H1 (cell line): ENCODE measurements at regions of chr6 and their contacts with region 1.

Region 1: DNA sequence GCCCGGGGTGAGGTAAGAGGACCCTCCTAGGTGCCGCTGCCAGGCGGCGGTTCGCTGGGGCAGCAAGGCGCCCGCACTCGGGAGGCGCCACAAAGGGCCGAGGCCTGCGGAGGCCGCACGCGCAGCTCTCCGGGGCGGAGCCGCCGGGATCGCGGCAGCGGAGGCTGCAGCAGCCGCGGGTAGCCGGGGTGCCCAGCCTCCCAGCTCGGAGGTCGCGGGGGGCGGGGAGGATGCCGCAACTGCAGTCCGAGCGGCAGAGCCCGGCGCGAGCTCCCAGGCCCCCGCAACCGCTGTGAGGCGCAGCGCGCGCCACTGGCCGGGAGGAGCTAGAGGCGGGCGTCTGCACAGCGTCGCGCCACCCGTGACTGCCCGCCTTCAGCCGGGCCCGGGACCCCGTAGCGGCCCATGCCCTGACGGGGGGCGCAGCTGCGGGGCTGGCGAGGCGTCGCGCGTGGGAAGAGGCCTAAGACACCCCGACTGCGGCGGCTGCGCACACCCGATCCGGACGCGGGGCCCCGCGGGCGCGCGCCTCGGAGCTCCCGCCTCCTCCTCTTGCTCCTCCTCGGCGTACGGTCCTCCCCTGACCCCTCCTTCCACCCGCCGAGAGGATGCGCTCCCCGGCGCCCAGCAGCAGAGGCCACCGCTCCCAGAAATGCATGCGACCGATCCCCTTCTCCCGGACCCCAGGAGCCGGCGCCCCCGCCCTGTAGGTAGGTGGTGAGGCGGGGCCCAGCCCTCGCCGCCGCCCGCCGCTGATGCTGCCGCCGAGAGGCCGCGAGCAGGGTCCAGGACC is at the start of gene NCOA7:
- DNase-seq: peak in 1 of 2 experiments; percentile 84
- H3K4me3 ChIP-seq: peak within 1 kb of the TSS; percentile 66 to 84 (median 74)
- H3K27ac ChIP-seq: peak within 1 kb of the TSS; percentile 49; the same call in 1 of the 2 replicates
- H3K4me1 ChIP-seq: peaks cover 2 to 10% (median 4%) of the 10 kb centered on the region in 4 experiments; a peak in 4 of 7 replicates
- H3K27me3 ChIP-seq: no peaks in the 10 kb centered on the region; a peak in 1 of 7 replicates
- CTCF ChIP-seq: no peak
- EP300 ChIP-seq: 0 out of 3 replicates have a peak, but pooled peaks of 1 of the 2 experiments have one; percentile 11
- POLR2A ChIP-seq: peak; percentile 53 to 77
- RAD21 ChIP-seq: no peak
- total RNA-seq, gene NCOA7: 10.3 and 10.7 TPM in 2 replicates

Region 2: GRCh38 chr6:125759184-125759902 is 31.2 kb before region 1 on chr6:
- CTCF ChIA-PET with region 1: interaction called, 15 read pairs
- POLR2A ChIA-PET with region 1: no interaction called
- DNase-seq: peak in 1 of 2 experiments; percentile 94
- H3K4me3 ChIP-seq: no peak overlapping the region
- H3K27ac ChIP-seq: no peak overlapping the region
- H3K4me1 ChIP-seq: peaks cover 0 to 3% (median 0%) of the 10 kb centered on the region in 4 experiments; a peak in 1 of 7 replicates
- H3K27me3 ChIP-seq: no peaks in the 10 kb centered on the region
- CTCF ChIP-seq: peak; percentile 65 to 94 (median 83)
- EP300 ChIP-seq: no peak
- POLR2A ChIP-seq: no peak
- RAD21 ChIP-seq: peak; percentile 76 to 81

Region 3: DNA sequence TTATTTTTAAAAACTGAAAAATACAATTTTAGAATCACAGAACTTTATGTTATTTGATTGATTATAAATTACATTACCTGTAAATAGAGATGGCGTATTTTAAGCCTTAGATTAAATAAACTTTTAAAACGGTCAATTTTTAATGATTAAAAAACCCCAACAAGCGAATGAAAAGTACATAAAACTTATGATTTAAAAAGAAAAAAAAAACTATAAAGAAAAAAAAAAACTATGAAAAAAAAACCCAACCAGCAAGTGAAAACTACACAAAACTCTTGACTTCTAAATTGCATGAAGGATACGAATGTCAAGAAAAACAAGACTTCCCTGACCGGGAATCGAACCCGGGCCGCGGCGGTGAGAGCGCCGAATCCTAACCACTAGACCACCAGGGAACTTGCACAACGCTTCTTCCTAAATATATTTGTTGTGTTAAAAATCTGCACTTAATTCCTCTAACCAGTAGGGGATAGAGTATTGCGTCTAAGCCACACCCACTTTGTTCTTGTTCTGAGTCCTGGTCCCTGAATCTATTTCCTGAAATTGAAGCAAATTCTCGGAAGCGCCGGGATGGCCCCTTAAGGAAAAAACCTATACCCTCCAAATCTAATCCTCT is 10.5 kb before region 1 on chr6:
- CTCF ChIA-PET with region 1: interaction called, 30 read pairs
- POLR2A ChIA-PET with region 1: interaction called, 66 read pairs
- DNase-seq: peak in 1 of 2 experiments; percentile 94
- H3K4me3 ChIP-seq: peak overlapping the region; percentile 78 to 97 (median 87)
- H3K27ac ChIP-seq: no peak overlapping the region
- H3K4me1 ChIP-seq: no peaks in the 10 kb centered on the region; a peak in 1 of 7 replicates
- H3K27me3 ChIP-seq: no peaks in the 10 kb centered on the region
- CTCF ChIP-seq: peak in 2 of 3 experiments; percentile 5 to 11; a peak in 1 of 4 replicates
- EP300 ChIP-seq: peak in 1 of 2 experiments; percentile 25; a peak in 1 of 3 replicates
- POLR2A ChIP-seq: no peak; a peak in 1 of 3 replicates
- RAD21 ChIP-seq: no peak

Region 4: GRCh38 chr6:125804264-125804663 is 13.7 kb after region 1 on chr6:
- CTCF ChIA-PET with region 1: interaction called, 18 read pairs
- POLR2A ChIA-PET with region 1: interaction called, 12 read pairs
- DNase-seq: no peak
- H3K4me3 ChIP-seq: no peak overlapping the region
- H3K27ac ChIP-seq: no peak overlapping the region
- H3K4me1 ChIP-seq: no peaks in the 10 kb centered on the region
- H3K27me3 ChIP-seq: no peaks in the 10 kb centered on the region
- CTCF ChIP-seq: no peak
- EP300 ChIP-seq: no peak
- POLR2A ChIP-seq: no peak
- RAD21 ChIP-seq: no peak

Region 5: GRCh38 chr6:125812394-125813292 is 22.1 kb after region 1 on chr6:
- CTCF ChIA-PET with region 1: interaction called, 18 read pairs
- POLR2A ChIA-PET with region 1: interaction called, 5 read pairs
- DNase-seq: no peak
- H3K4me3 ChIP-seq: no peak overlapping the region
- H3K27ac ChIP-seq: no peak overlapping the region
- H3K4me1 ChIP-seq: no peaks in the 10 kb centered on the region
- H3K27me3 ChIP-seq: no peaks in the 10 kb centered on the region
- CTCF ChIP-seq: no peak
- EP300 ChIP-seq: no peak
- POLR2A ChIP-seq: no peak
- RAD21 ChIP-seq: no peak

Region 6: GRCh38 chr6:125986300-125987025 is 195.9 kb after region 1 on chr6 and contains the start of gene TRMT11:
- CTCF ChIA-PET with region 1: no interaction called
- POLR2A ChIA-PET with region 1: interaction called, 12 read pairs
- DNase-seq: peak; percentile 85 to 88
- H3K4me3 ChIP-seq: peak within 1 kb of the TSS; percentile 89 to 97 (median 90)
- H3K27ac ChIP-seq: peak within 1 kb of the TSS; percentile 82
- H3K4me1 ChIP-seq: peaks cover 0 to 10% (median 3%) of the 10 kb centered on the region in 4 experiments; a peak in 4 of 7 replicates
- H3K27me3 ChIP-seq: no peaks in the 10 kb centered on the region
- CTCF ChIP-seq: peak in 1 of 3 experiments; percentile 8; a peak in 1 of 4 replicates
- EP300 ChIP-seq: no peak
- POLR2A ChIP-seq: peak; percentile 90 to 92
- RAD21 ChIP-seq: no peak
- total RNA-seq, gene TRMT11: 23.3 and 32.4 TPM in 2 replicates

Region 7: GRCh38 chr6:125995972-125996580 is 205.5 kb after region 1 on chr6:
- CTCF ChIA-PET with region 1: interaction called, 17 read pairs
- POLR2A ChIA-PET with region 1: no interaction called
- DNase-seq: peak in 1 of 2 experiments; percentile 77
- H3K4me3 ChIP-seq: no peak overlapping the region
- H3K27ac ChIP-seq: no peak overlapping the region
- H3K4me1 ChIP-seq: no peaks in the 10 kb centered on the region
- H3K27me3 ChIP-seq: no peaks in the 10 kb centered on the region
- CTCF ChIP-seq: peak; percentile 69 to 86 (median 75)
- EP300 ChIP-seq: no peak
- POLR2A ChIP-seq: no peak
- RAD21 ChIP-seq: peak; percentile 80 to 86